ENCODE measurements at regions of chr18 and their contacts with region 1.

Region 1: GRCh38 chr18:35085450-35086380 is 44.5 kb downstream of the MAPRE2 start:
- DNase-seq: peak; percentile 82
- ATAC-seq: peak; percentile 68
- H3K4me3 ChIP-seq: peak overlapping the region in 1 of 3 experiments; percentile 17; a peak in 2 of 6 replicates
- H3K27ac ChIP-seq: peak overlapping the region; percentile 87
- H3K4me1 ChIP-seq: peaks cover 52% of the 10 kb centered on the region
- H3K27me3 ChIP-seq: no peaks in the 10 kb centered on the region
- CTCF ChIP-seq: no peak
- EP300 ChIP-seq: peak in 1 of 2 experiments; percentile 26; a peak in 1 of 4 replicates
- POLR2A ChIP-seq: no peak
- RAD21 ChIP-seq: no peak

Region 2: DNA sequence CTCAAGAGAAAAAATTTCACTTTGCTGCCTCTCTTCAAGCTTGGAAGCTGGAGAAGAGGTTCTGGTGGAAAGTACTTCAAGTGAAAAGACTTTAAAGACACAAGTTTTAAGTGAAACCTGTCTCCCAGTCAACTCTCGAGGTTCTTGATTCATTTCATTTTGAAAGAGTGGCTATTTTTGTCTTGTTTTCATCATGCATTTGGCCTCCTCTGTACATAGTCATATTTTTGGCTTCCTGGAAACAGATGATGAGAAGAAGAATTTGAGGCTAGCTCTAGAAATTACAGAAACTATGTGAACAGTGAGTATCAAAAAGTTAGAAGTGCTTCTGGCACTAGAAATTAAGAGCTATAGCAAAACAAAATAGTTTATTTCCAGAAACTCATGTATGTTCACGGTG is 250.8 kb before region 1 on chr18:
- CTCF ChIA-PET with region 1: no interaction called
- POLR2A ChIA-PET with region 1: no interaction called
- in situ Hi-C with region 1: no loop called
- intact Hi-C with region 1: no loop called
- DNase-seq: no peak
- ATAC-seq: no peak
- H3K4me3 ChIP-seq: no peak overlapping the region
- H3K27ac ChIP-seq: no peak overlapping the region
- H3K4me1 ChIP-seq: peaks cover 8% of the 10 kb centered on the region; the same call in 1 of the 2 replicates
- H3K27me3 ChIP-seq: no peaks in the 10 kb centered on the region
- CTCF ChIP-seq: no peak
- EP300 ChIP-seq: no peak
- POLR2A ChIP-seq: no peak
- RAD21 ChIP-seq: no peak

Region 3: GRCh38 chr18:35040988-35041814 is 44.5 kb before region 1 on chr18 and contains the start of gene MAPRE2:
- CTCF ChIA-PET with region 1: no interaction called
- POLR2A ChIA-PET with region 1: interaction called, 7 read pairs
- in situ Hi-C with region 1: no loop called
- intact Hi-C with region 1: loop called (anchors 2 kb)
- DNase-seq: peak; percentile 89
- ATAC-seq: peak; percentile 97
- H3K4me3 ChIP-seq: peak within 1 kb of the TSS; percentile 74 to 84 (median 83)
- H3K27ac ChIP-seq: peak within 1 kb of the TSS; percentile 71
- H3K4me1 ChIP-seq: peaks cover 49% of the 10 kb centered on the region
- H3K27me3 ChIP-seq: no peaks in the 10 kb centered on the region
- CTCF ChIP-seq: 0 out of 2 replicates have a peak, but pooled peaks have one; percentile 26
- EP300 ChIP-seq: peak in 1 of 2 experiments; percentile 0; a peak in 1 of 4 replicates
- POLR2A ChIP-seq: peak; percentile 96 to 99
- RAD21 ChIP-seq: 0 out of 2 replicates have a peak, but pooled peaks have one; percentile 39
- total RNA-seq, gene MAPRE2: 34.5 and 59.9 TPM in 2 replicates

Region 4: GRCh38 chr18:35122586-35123224 is 37.0 kb after region 1 on chr18:
- CTCF ChIA-PET with region 1: no interaction called
- POLR2A ChIA-PET with region 1: no interaction called
- in situ Hi-C with region 1: no loop called
- intact Hi-C with region 1: no loop called
- DNase-seq: no peak
- ATAC-seq: no peak
- H3K4me3 ChIP-seq: no peak overlapping the region
- H3K27ac ChIP-seq: no peak overlapping the region
- H3K4me1 ChIP-seq: no peaks in the 10 kb centered on the region
- H3K27me3 ChIP-seq: no peaks in the 10 kb centered on the region
- CTCF ChIP-seq: no peak
- EP300 ChIP-seq: no peak
- POLR2A ChIP-seq: no peak
- RAD21 ChIP-seq: no peak

Region 5: DNA sequence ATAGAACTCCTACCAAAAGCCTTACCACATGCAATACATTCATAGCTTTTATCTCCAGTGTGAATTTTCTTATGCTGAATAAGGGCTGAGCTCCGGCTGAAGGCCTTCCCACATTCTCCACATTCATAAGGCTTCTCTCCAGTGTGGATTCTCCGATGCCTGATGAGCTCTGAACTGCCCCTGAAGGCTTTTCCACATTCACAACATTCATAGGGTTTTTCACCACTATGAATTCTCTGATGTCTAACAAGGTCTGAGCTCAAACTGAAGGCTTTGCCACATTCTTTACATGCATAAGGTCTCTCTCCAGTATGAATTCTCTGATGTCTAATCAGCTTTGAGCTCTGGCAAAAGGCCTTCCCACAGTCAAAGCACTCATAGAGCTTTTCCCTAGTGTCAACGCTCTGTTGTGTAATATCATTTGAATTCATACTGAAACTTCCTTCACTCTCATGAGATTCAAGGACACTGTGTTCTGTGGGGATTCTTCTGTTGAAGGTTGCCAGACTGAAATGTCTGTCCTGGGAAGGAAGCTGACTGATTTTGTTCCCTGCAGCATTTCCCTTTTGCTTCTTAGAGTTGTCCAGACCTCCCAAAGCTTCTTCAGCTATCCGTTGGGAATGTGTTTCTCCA is 168.1 kb after region 1 on chr18:
- CTCF ChIA-PET with region 1: no interaction called
- POLR2A ChIA-PET with region 1: no interaction called
- in situ Hi-C with region 1: no loop called
- intact Hi-C with region 1: no loop called
- DNase-seq: no peak
- ATAC-seq: no peak
- H3K4me3 ChIP-seq: no peak overlapping the region
- H3K27ac ChIP-seq: no peak overlapping the region
- H3K4me1 ChIP-seq: peaks cover 3% of the 10 kb centered on the region; the same call in 1 of the 2 replicates
- H3K27me3 ChIP-seq: no peaks in the 10 kb centered on the region; a peak in 1 of 5 replicates
- CTCF ChIP-seq: no peak
- EP300 ChIP-seq: no peak
- POLR2A ChIP-seq: no peak
- RAD21 ChIP-seq: no peak

Region 6: GRCh38 chr18:35443434-35443833 is 357.7 kb after region 1 on chr18:
- CTCF ChIA-PET with region 1: no interaction called
- POLR2A ChIA-PET with region 1: no interaction called
- in situ Hi-C with region 1: no loop called
- intact Hi-C with region 1: no loop called
- DNase-seq: no peak
- ATAC-seq: peak; percentile 37
- H3K4me3 ChIP-seq: no peak overlapping the region
- H3K27ac ChIP-seq: no peak overlapping the region
- H3K4me1 ChIP-seq: peaks cover 18% of the 10 kb centered on the region
- H3K27me3 ChIP-seq: peaks cover 0 to 2% of the 10 kb centered on the region in 2 experiments; a peak in 2 of 5 replicates
- CTCF ChIP-seq: no peak
- EP300 ChIP-seq: no peak
- POLR2A ChIP-seq: no peak
- RAD21 ChIP-seq: no peak

Measured in HepG2 (cell line).